Tibial artery (tissue), 4 donors: ENCODE measurements at regions of chr19 and their contacts with region 1.

Region 1: GRCh38 chr19:16041299-16041990 is 34.9 kb upstream of the TPM4 start:
- DNase-seq: peak; percentile 69 to 89
- H3K4me3 ChIP-seq: peak overlapping the region; percentile 23 to 24
- H3K27ac ChIP-seq: peak overlapping the region; percentile 33 to 51
- H3K4me1 ChIP-seq: peaks cover 0 to 15% (median 5%) of the 10 kb centered on the region in 4 donors
- H3K27me3 ChIP-seq: no peaks in the 10 kb centered on the region
- CTCF ChIP-seq: peak; percentile 97 to 99

Region 2: GRCh38 chr19:15717809-15718208 is 323.6 kb before region 1 on chr19:
- intact Hi-C with region 1: no loop called
- DNase-seq: no peak
- H3K4me3 ChIP-seq: no peak overlapping the region
- H3K27ac ChIP-seq: no peak overlapping the region
- H3K4me1 ChIP-seq: no peaks in the 10 kb centered on the region
- H3K27me3 ChIP-seq: peaks cover 0 to 12% of the 10 kb centered on the region in 2 donors
- CTCF ChIP-seq: no peak

Region 3: GRCh38 chr19:16111160-16111908 is 69.9 kb after region 1 on chr19 and contains the start of gene RAB8A:
- intact Hi-C with region 1: loop called (anchors 5 kb)
- DNase-seq: peak; percentile 99 to 100
- H3K4me3 ChIP-seq: peak within 1 kb of the TSS; percentile 88 to 96
- H3K27ac ChIP-seq: peak within 1 kb of the TSS; percentile 87 to 97
- H3K4me1 ChIP-seq: peaks cover 0 to 49% (median 31%) of the 10 kb centered on the region in 4 donors
- H3K27me3 ChIP-seq: no peaks in the 10 kb centered on the region
- CTCF ChIP-seq: peak; percentile 98 to 100